ENCODE measurements at regions of chr5 and their contacts with region 1.

Region 1: DNA sequence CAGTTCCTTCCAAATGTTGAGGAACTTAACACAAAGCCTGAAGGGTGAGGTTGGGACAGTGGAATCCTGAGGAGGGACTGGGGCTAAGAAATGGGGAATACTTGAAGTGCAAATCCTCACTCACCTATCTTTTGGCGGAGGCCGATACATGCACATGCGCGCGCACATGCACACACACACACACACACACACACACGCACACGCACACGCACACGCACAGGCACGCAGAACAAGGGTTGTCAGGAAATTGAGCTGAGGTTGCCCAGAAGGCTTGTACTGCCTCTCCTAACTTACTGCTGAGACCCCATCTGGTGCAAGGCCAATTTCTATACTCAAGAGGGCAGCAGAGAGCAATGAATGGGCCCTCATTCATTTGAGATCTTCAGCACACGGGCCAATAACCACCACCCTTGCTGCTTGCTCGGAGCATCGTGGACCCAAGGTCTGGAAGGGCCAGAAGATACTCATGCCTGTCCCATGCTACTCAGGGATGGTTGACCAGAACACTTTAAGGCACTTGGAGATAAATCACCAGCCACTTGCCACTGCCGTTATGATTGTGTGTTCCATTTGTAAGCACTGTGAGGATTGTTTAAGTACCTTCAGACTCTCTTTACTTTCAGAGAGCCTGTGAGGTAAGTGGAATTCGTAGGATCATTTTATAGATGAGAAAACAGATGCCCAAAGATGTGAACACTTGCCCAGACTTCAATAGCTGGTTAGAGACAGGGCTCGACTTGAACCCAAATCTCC is 21.5 kb downstream of the BTF3 start:
- DNase-seq: peak in 1 of 2 donors; percentile 55
- ATAC-seq: peak; percentile 91
- H3K4me3 ChIP-seq: no peak overlapping the region
- H3K27ac ChIP-seq: no peak overlapping the region
- H3K4me1 ChIP-seq: peaks cover 2 to 4% of the 10 kb centered on the region in 2 donors
- H3K27me3 ChIP-seq: no peaks in the 10 kb centered on the region

Region 2: DNA sequence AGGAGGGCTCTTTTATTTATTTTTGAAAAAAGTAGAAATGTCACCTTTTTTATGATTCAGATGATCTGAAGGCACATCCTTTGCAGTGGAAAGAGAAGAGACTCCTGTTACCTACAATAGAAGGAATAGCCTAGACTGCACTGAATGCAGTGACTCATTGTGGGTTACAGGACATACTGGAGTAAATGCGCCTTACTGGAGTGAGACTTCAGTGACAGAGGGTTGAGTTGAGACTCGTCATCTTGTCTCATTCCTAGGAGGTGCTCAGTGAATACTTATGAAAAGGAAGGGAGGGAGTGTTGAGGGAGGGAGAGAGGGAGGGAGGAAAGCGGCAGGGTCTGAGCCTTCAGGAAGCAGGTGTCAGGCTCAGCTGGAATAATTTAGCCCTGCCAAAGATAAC is 20.5 kb after region 1 on chr5:
- intact Hi-C with region 1: loop called (anchors 2 kb)
- DNase-seq: no peak
- ATAC-seq: no peak
- H3K4me3 ChIP-seq: no peak overlapping the region
- H3K27ac ChIP-seq: no peak overlapping the region
- H3K4me1 ChIP-seq: peaks cover 3% of the 10 kb centered on the region in 2 donors
- H3K27me3 ChIP-seq: no peaks in the 10 kb centered on the region

Measured in aorta (tissue), 5 donors.